CD4-positive, alpha-beta T cell (primary cell): ENCODE measurements at regions of chr3 and their contacts with region 1.

Region 1: DNA sequence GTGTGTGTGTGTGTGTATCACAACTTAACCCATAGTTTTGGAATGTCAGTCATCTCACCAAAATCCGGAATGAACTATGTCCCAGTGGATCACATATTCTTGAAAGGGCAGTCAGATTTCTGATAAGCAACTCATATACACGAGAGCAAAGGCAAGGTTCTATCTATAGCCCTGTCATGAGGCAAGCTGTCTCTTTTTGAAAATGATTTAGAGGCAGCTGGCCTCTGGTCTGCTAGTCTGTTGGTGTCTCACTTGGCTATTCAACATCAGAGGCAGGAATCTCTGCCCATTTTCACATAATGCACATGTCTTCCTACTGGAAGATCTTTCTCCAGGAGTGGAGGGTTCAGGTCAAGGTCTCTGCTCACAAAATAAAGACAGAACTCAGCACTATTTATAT is 79.8 kb downstream of the CNTN6 start:
- DNase-seq: no peak
- ATAC-seq: no peak
- H3K4me3 ChIP-seq: no peak overlapping the region
- H3K4me3 Mint-ChIP-seq: no peak overlapping the region
- H3K27ac ChIP-seq: no peak overlapping the region
- H3K27ac Mint-ChIP-seq: no peak overlapping the region
- H3K4me1 ChIP-seq: no peaks in the 10 kb centered on the region
- H3K4me1 Mint-ChIP-seq: no peaks in the 10 kb centered on the region
- H3K27me3 ChIP-seq: no peaks in the 10 kb centered on the region
- H3K27me3 Mint-ChIP-seq: no peaks in the 10 kb centered on the region
- CTCF ChIP-seq: no peak

Region 2: DNA sequence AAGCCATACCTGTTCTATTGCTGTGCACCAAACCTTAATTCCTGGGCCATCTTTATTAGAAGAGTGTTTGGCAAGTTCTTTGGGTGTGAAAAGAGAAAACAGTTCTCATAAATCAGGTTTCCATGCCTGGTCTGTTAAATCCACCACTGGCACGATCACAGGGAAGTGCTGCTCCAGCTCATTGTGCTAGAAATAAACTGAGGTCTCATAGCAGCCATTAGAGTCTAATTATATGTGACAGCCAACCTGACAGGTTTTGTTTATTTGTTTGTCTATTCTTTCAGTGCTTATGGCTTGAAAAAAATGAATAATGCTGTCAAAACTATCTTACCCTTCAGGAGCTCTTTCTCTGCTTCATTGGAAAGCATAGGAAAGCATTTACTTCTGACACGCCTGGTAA is 226.9 kb before region 1 on chr3:
- CTCF ChIA-PET with region 1: no interaction called
- POLR2A ChIA-PET with region 1: no interaction called
- intact Hi-C with region 1: no loop called
- DNase-seq: no peak
- ATAC-seq: no peak
- H3K4me3 ChIP-seq: no peak overlapping the region
- H3K4me3 Mint-ChIP-seq: no peak overlapping the region
- H3K27ac ChIP-seq: no peak overlapping the region
- H3K27ac Mint-ChIP-seq: no peak overlapping the region
- H3K4me1 ChIP-seq: no peaks in the 10 kb centered on the region
- H3K4me1 Mint-ChIP-seq: no peaks in the 10 kb centered on the region
- H3K27me3 ChIP-seq: no peaks in the 10 kb centered on the region
- H3K27me3 Mint-ChIP-seq: no peaks in the 10 kb centered on the region
- CTCF ChIP-seq: no peak

Region 3: GRCh38 chr3:1787094-1787493 is 614.5 kb after region 1 on chr3:
- CTCF ChIA-PET with region 1: no interaction called
- POLR2A ChIA-PET with region 1: no interaction called
- intact Hi-C with region 1: loop called in 1 of 2 experiments (anchors 10 kb)
- DNase-seq: no peak
- ATAC-seq: no peak
- H3K4me3 ChIP-seq: no peak overlapping the region
- H3K4me3 Mint-ChIP-seq: no peak overlapping the region
- H3K27ac ChIP-seq: no peak overlapping the region
- H3K27ac Mint-ChIP-seq: no peak overlapping the region
- H3K4me1 ChIP-seq: no peaks in the 10 kb centered on the region
- H3K4me1 Mint-ChIP-seq: no peaks in the 10 kb centered on the region
- H3K27me3 ChIP-seq: no peaks in the 10 kb centered on the region
- H3K27me3 Mint-ChIP-seq: no peaks in the 10 kb centered on the region
- CTCF ChIP-seq: no peak